ENCODE measurements at regions of chr20 and their contacts with region 1.

Region 1: DNA sequence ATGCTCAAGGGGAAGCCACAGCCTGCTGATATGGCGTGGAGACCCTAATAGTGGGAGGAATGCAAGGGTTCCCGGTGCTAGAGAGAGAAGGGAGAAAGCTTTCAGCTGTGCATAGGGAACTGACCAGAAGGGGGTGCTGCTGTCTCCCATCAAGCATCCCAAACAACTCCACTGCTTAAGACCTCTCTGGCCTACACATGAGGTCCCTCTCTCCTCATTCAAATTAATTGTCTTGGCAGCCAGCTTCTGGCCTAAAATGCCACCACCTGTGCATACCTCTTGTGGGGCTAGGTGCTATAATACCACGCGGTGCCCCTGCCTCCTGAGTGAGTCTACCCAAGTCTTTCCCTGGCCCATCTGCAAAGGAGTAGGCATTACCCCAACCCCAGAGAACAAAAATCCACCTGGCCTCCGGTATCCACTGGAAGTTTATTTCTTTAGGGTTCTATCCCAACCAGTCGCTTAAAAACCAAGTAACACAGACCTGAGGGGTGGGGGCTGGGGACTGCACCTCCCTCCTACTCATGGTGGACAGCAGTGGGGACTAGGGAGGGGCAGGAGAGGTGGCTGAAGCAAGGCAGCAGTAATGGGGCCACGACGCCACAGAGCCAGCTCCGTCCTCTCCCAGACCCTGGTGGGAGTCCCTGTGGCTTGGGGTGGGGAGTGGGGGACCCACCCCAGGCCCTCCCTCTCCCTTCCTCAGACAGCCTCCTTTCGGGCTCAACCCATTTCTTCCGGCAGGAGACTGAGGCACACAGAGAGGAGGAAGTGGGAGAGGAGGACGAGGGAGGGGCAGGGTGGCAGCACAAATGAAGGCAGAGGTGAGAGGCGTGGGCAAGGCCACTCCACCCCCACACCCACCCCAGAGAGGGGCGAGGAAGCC is 14.2 kb downstream of the ADISSP start:
- H3K4me3 ChIP-seq: no peak overlapping the region
- H3K27ac ChIP-seq: no peak overlapping the region
- H3K4me1 ChIP-seq: peaks cover 4% of the 10 kb centered on the region; the same call in 1 of the 2 replicates
- CTCF ChIP-seq: peak; percentile 64; the same call in 1 of the 2 replicates

Region 2: GRCh38 chr20:3734111-3734843 is 19.1 kb before region 1 on chr20:
- CTCF ChIA-PET with region 1: interaction called, 23 read pairs
- POLR2A ChIA-PET with region 1: interaction called, 4 read pairs
- H3K4me3 ChIP-seq: no peak overlapping the region
- H3K27ac ChIP-seq: no peak overlapping the region
- H3K4me1 ChIP-seq: peaks cover 10% of the 10 kb centered on the region; the same call in 1 of the 2 replicates
- CTCF ChIP-seq: no peak

Region 3: DNA sequence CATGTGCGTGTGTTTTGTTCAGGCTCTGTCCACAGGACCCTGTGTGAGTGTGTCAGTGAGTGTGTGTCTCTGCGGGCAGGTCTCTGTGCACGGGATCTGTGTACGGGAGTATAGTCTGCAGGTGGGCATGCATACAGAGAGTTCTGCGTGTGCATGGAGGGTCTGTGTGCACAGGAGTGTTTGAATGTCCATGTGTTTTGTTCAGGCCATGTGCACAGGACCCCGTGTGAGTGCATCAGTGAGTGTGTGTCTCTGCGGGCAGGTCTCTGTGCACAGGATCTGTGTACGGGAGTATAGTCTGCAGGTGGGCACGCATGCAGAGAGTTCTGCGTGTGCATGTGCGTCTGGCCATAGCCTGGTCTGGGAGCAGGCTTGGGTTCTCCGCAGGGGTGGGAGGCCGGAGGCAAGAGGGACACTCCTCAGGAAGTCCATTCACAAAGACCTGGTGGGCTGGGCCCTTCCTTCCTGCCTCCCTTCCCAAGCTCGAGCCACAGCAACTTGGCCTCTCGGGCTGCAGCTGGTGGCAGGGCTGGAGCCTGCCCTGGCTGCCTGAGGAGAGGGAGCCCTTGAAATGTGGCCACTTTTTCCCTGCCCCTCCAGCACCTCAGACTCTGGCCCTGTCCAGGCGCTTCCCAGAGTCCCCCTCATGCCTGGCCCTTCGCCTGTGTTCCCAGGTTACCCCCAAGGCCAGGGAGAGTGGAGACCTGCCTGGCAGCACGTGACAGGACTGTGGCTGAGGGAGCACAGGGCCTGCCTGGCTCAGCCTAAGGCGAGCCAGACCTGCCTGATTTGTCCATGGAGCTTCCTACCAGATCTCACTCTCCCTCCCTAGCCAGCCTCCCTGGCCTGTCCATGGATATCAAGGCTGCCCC is 14.0 kb before region 1 on chr20:
- CTCF ChIA-PET with region 1: interaction called, 23 read pairs
- POLR2A ChIA-PET with region 1: interaction called, 3 read pairs
- H3K4me3 ChIP-seq: no peak overlapping the region
- H3K27ac ChIP-seq: no peak overlapping the region
- H3K4me1 ChIP-seq: peaks cover 10% of the 10 kb centered on the region; the same call in 1 of the 2 replicates
- CTCF ChIP-seq: no peak

Region 4: DNA sequence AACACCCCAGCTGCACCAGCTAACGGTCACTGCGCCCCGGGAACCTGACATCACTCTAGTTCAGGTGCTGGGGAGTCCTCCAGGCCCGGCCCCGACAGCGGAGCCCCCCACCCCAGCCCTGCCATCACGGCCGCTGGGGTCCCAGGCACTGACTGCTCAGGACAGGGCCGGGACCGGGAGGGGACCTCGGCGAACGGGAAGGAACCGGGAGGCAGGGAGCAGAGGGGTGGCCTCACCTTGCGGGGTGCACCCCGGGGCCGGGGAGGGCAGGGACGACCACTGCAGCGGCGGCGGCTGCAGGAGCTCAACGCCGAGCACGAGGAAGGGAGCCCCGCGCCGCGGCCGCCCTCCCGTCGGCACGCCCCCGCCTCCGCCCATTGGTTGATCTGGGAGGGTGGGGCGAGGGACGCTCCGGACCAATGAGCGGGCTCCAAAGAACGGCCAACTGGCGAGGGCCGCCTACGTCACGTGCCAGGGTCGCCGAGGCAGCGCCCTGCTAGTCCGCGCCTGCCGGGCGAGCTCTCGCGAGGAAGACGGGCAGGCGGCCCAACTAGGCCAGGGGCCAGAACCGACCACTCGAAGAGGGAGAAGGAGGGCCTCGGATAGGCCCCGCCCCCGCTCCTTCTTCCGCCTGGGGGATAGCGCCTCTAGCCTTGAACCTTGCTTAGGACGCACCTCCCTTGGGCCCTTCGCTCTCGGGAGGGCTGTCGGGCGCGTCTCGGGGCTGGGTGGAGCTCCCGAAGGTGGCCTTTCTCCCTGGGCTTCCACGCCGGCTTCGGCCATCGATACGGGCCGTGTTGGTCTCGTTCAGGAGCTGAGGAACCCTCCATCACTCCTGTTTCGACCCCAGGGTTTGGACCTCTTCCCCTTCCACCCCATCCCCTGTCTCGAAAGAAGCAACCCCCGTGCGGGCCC is 14.3 kb after region 1 on chr20 and contains the start of gene ADISSP:
- CTCF ChIA-PET with region 1: interaction called, 133 read pairs
- POLR2A ChIA-PET with region 1: interaction called, 17 read pairs
- H3K4me3 ChIP-seq: peak within 1 kb of the TSS; percentile 74
- H3K27ac ChIP-seq: peak within 1 kb of the TSS; percentile 68
- H3K4me1 ChIP-seq: peaks cover 7% of the 10 kb centered on the region
- CTCF ChIP-seq: peak; percentile 44; the same call in 1 of the 2 replicates

Region 5: DNA sequence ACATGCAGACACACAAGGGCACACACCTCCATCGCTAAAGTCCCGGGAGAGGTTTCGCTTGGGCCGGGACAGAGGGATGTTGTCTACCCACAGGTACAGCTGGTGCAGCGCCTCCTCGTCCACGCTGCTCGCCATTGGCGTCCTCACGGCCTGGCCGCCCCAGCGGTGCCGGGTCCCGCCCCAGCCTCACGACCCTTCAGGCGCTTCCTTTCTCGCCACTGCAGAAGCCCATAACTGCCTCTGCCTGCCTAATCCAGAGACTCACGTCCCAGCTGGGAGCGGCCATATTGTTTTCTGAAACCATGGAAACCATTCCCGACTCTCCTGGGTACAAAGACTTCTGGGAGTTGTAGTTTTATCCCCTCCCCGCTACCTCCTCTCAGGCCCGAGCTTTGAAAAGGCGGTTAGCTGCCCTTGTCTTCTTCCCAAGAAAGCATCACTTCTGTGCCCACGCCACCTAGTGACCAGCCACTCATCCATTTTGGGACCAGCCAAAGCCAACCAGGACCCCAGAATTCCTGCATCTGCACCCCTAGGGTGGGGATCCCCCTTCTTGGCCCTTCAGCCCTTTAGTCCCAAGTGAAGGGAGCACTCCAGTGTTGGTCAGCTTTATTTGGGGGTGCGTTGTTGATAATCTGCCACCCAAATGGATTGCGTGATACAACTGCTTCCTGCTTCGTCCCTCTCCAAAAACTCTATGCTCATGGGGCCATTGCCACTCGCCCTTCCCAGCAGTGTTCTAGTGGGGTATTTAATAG is 28.0 kb after region 1 on chr20 and contains the start of gene SPEF1:
- CTCF ChIA-PET with region 1: interaction called, 11 read pairs
- POLR2A ChIA-PET with region 1: interaction called, 3 read pairs
- H3K4me3 ChIP-seq: peak within 1 kb of the TSS; percentile 41
- H3K27ac ChIP-seq: no peak within 1 kb of the TSS
- H3K4me1 ChIP-seq: peaks cover 13% of the 10 kb centered on the region; the same call in 1 of the 2 replicates
- CTCF ChIP-seq: peak; percentile 86

Region 6: DNA sequence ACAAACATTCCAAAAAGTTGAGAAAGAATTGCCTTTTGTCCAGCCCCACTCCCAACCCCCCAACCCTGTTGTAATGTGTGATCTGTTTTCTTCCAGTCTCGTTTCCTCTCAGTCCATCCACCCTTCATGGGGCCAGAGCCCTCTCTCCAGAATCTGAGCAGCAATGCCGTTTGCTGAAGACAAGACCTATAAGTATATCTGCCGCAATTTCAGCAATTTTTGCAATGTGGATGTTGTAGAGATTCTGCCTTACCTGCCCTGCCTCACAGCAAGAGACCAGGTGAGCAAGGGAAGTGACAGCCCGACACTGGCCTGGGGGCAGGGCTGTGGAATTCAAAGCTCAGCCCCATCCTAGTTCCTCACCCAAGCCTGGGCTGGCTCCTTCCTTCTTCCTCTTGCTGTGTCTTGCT is 101.1 kb after region 1 on chr20:
- CTCF ChIA-PET with region 1: interaction called, 17 read pairs
- POLR2A ChIA-PET with region 1: no interaction called
- H3K4me3 ChIP-seq: no peak overlapping the region
- H3K27ac ChIP-seq: no peak overlapping the region
- H3K4me1 ChIP-seq: no peaks in the 10 kb centered on the region
- CTCF ChIP-seq: no peak